B cell (primary cell): ENCODE measurements at regions of chr7 and their contacts with region 1.

Region 1: DNA sequence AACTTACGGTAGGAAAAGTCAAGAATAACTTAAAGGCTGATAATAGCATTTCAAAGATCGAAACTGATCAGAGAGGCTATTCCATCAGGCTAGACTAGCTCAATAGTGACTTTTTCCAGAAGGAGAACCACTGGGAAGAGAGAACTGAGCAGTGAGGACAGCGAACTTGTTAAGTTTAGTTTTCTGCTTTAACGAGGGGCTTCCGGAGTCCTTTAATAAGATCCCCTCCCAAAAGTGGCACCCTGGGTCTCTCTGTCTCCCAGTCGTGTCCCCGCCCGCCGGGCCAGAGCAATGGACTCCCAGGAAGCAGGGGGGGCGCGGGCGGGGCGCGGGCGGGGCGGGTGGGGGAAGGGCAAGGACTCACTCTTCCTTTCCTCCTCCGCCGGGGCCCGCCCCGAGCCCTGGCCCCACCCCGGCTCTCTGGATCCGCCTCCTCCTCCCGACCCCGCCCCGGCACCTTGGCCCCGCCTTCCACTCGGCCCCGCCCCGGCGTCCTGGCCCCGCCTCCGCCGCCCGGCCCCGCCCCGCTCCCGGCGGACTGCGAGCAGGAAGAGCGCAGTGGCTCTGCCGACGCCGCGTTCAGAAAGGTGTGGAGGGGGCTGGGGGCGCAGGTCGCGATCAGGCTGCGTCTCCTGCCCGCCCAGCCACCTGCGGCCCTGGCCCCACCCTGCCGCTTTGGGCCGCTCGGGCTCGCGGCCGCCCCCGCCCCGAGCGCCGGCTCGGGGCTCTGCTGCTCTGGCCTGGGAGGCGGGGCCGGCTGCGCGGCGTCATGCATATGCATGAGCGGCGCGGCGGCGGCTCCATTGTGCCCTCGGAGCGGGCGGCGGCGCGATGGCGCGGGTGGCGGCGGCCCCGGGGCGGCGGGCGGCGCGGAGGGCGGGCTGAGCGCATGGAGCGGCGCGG is at the start of gene ZMIZ2:
- DNase-seq: peak; percentile 96
- ATAC-seq: peak; percentile 80
- H3K4me3 ChIP-seq: peak within 1 kb of the TSS; percentile 61 to 89 (median 74)
- H3K4me3 Mint-ChIP-seq: peak within 1 kb of the TSS; percentile 88
- H3K27ac ChIP-seq: peak within 1 kb of the TSS; percentile 96 to 97
- H3K27ac Mint-ChIP-seq: peak within 1 kb of the TSS; percentile 97
- H3K4me1 ChIP-seq: peaks cover 43 to 48% of the 10 kb centered on the region in 2 donors
- H3K4me1 Mint-ChIP-seq: peaks cover 51% of the 10 kb centered on the region
- H3K27me3 ChIP-seq: no peaks in the 10 kb centered on the region
- H3K27me3 Mint-ChIP-seq: no peaks in the 10 kb centered on the region
- CTCF ChIP-seq: no peak
- total RNA-seq, gene ZMIZ2: 442 and 446 TPM in 2 replicates

Region 2: DNA sequence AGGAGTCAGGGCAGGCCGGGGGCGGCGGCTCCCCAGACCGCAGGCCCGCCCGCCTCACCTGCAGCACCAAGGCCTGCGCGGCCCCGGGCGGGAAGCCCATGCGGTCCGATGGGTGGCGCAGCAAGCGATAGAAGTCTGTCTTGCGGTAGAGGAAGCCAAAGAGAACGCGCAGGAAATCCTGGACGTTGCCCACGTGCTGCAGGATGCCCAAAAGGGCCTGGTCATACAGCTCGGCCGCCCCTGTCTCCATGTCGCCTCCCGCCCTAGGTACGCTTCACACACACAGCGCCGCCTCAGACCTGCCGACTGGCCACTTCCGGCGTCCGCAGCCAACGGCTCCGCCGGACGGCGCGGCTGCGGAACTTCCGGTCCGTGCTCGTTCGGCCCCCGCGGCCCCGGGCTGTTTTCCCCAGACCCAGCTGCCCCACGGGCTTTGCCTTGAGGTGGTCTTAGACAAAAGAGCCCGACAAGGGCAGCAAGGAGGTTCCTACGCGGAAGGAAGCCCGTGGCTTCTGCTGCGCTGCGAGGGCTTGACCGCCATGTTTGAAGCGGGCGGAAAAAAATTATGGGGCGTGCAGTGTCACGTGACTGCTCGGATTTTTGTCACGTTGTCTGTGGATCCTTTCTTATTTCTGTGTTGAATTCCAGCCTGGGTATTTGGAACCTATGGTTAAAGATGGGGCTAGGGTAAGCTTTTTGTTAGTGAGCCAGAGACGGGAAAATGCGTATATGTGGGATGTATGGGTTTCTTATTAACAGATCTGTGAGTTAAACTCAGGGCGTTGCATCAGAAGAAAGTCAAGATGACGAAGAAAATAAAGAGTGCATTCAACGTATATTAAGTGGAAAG is 257.7 kb before region 1 on chr7 and contains the start of gene NUDCD3:
- CTCF ChIA-PET with region 1: no interaction called
- POLR2A ChIA-PET with region 1: no interaction called
- intact Hi-C with region 1: loop called (anchors 2 kb)
- DNase-seq: peak; percentile 91
- ATAC-seq: peak; percentile 84
- H3K4me3 ChIP-seq: peak within 1 kb of the TSS; percentile 89 to 98 (median 93)
- H3K4me3 Mint-ChIP-seq: peak within 1 kb of the TSS; percentile 91
- H3K27ac ChIP-seq: peak within 1 kb of the TSS; percentile 93 to 94
- H3K27ac Mint-ChIP-seq: peak within 1 kb of the TSS; percentile 93
- H3K4me1 ChIP-seq: peaks cover 19 to 28% of the 10 kb centered on the region in 2 donors
- H3K4me1 Mint-ChIP-seq: peaks cover 44% of the 10 kb centered on the region
- H3K27me3 ChIP-seq: peaks cover 0 to 6% (median 3%) of the 10 kb centered on the region in 4 experiments
- H3K27me3 Mint-ChIP-seq: peaks cover 8% of the 10 kb centered on the region
- CTCF ChIP-seq: peak; percentile 27
- total RNA-seq, gene NUDCD3: 101 and 120 TPM in 2 replicates

Region 3: DNA sequence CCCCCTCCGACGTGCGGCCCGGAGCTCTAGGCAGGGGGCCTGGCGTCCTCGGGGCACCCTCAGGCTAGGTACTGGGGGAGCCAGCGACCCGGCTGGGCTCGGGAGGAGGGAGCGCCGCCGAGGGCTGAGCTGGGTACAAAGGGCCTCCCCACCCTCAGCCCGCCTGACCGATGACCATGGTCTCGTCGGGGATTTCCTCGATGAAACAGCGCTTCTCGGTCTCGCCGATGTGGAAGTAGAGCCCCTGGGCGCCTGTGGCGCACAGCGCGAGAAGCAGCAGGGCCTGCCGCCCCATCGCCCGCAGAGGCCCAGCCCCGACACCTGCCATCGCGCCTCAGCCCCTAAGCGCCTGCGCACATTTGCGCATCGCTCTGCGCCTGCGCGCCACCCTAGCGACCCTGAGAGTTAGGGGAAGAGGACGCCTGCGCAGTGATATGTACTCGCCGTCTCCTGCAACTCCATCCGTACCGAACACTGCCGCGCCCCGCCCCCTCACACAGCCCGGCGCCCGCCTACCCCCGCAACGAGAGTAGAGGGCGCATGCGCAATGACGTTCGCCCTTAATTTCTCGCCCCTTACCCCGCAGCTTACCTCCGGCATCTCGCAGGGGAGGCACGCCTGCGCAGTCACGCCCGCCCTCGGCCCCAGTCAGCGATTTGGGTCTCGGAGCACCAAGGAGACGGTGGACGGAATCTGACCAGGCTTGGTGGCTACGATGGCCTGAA is 166.3 kb before region 1 on chr7 and contains the start of gene TMED4:
- CTCF ChIA-PET with region 1: interaction called, 5 read pairs
- POLR2A ChIA-PET with region 1: interaction called, 5 read pairs
- intact Hi-C with region 1: loop called (anchors 1 kb)
- DNase-seq: peak; percentile 100
- ATAC-seq: peak; percentile 92
- H3K4me3 ChIP-seq: peak within 1 kb of the TSS; percentile 72 to 99 (median 88)
- H3K4me3 Mint-ChIP-seq: peak within 1 kb of the TSS; percentile 96
- H3K27ac ChIP-seq: peak within 1 kb of the TSS; percentile 92 to 97
- H3K27ac Mint-ChIP-seq: peak within 1 kb of the TSS; percentile 99
- H3K4me1 ChIP-seq: peaks cover 21% of the 10 kb centered on the region in 2 donors
- H3K4me1 Mint-ChIP-seq: peaks cover 28% of the 10 kb centered on the region
- H3K27me3 ChIP-seq: no peaks in the 10 kb centered on the region
- H3K27me3 Mint-ChIP-seq: no peaks in the 10 kb centered on the region
- CTCF ChIP-seq: no peak
- total RNA-seq, gene TMED4: 84.0 and 84.1 TPM in 2 replicates

Region 4: DNA sequence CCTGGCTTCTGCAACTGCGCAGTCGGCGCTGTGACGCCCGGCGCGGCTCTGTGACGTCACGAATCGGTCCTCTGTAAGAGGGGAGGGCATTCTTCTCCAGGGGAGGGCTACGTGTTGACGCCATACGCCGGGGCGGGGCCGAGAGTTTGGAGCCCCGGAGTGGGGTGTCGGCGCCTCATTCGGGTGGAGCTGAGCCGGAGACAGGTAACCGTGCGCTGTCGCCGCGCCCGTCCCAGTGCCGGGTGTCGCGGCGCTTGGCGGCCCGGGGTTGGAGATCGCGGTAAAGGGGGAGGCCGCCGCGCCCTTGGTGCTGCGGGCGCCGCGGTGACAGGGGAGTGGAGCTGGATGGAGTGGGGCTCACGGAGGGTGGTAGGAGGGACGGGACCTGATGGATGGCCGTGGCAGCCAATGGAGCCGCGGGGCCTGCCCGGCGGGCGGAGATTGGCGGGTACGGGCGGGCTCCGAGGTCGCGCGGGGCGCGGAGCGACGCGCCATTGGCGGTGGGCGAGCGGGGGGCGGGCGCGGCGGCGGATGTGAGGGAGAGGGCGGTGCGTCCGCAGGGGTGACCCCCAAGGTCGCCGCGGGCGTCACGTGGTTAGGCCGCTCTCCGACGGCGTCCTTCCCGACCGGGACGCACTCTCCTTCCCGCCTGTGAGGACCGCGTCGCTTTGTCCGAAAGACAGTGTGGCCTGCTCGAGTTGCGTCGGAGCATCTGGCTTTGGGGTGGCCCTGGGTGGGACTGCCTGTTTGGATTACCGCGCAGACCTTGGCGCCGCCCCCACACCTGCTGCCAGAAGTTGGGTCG is 141.6 kb before region 1 on chr7 and contains the start of gene OGDH:
- CTCF ChIA-PET with region 1: interaction called, 15 read pairs
- POLR2A ChIA-PET with region 1: interaction called, 15 read pairs
- intact Hi-C with region 1: loop called (anchors 1 kb)
- DNase-seq: peak; percentile 100
- ATAC-seq: peak; percentile 91
- H3K4me3 ChIP-seq: peak within 1 kb of the TSS; percentile 80 to 93 (median 85)
- H3K4me3 Mint-ChIP-seq: peak within 1 kb of the TSS; percentile 99
- H3K27ac ChIP-seq: peak within 1 kb of the TSS; percentile 87 to 96
- H3K27ac Mint-ChIP-seq: peak within 1 kb of the TSS; percentile 99
- H3K4me1 ChIP-seq: peaks cover 15 to 34% of the 10 kb centered on the region in 2 donors
- H3K4me1 Mint-ChIP-seq: peaks cover 41% of the 10 kb centered on the region
- H3K27me3 ChIP-seq: no peaks in the 10 kb centered on the region
- H3K27me3 Mint-ChIP-seq: peaks cover 4% of the 10 kb centered on the region
- CTCF ChIP-seq: no peak
- total RNA-seq, gene OGDH: 71.5 and 80.2 TPM in 2 replicates

Region 5: GRCh38 chr7:44735403-44736165 is 12.7 kb before region 1 on chr7:
- CTCF ChIA-PET with region 1: no interaction called
- POLR2A ChIA-PET with region 1: interaction called, 6 read pairs
- intact Hi-C with region 1: loop called (anchors 1 kb)
- DNase-seq: no peak
- ATAC-seq: peak; percentile 54
- H3K4me3 ChIP-seq: no peak overlapping the region
- H3K4me3 Mint-ChIP-seq: no peak overlapping the region
- H3K27ac ChIP-seq: no peak overlapping the region
- H3K27ac Mint-ChIP-seq: no peak overlapping the region
- H3K4me1 ChIP-seq: peaks cover 0 to 4% of the 10 kb centered on the region in 2 donors
- H3K4me1 Mint-ChIP-seq: peaks cover 9% of the 10 kb centered on the region
- H3K27me3 ChIP-seq: no peaks in the 10 kb centered on the region
- H3K27me3 Mint-ChIP-seq: no peaks in the 10 kb centered on the region
- CTCF ChIP-seq: no peak

Region 6: GRCh38 chr7:44797329-44798251 is 49.3 kb after region 1 on chr7:
- CTCF ChIA-PET with region 1: interaction called, 17 read pairs
- POLR2A ChIA-PET with region 1: interaction called, 10 read pairs
- intact Hi-C with region 1: loop called (anchors 1 kb)
- DNase-seq: peak; percentile 87
- ATAC-seq: peak; percentile 49
- H3K4me3 ChIP-seq: peak overlapping the region; percentile 77 to 98 (median 93)
- H3K4me3 Mint-ChIP-seq: peak overlapping the region; percentile 93
- H3K27ac ChIP-seq: peak overlapping the region; percentile 92 to 97
- H3K27ac Mint-ChIP-seq: peak overlapping the region; percentile 98
- H3K4me1 ChIP-seq: peaks cover 15 to 26% of the 10 kb centered on the region in 2 donors
- H3K4me1 Mint-ChIP-seq: peaks cover 40% of the 10 kb centered on the region
- H3K27me3 ChIP-seq: no peaks in the 10 kb centered on the region
- H3K27me3 Mint-ChIP-seq: no peaks in the 10 kb centered on the region
- CTCF ChIP-seq: peak; percentile 73

Region 7: GRCh38 chr7:44867073-44867995 is 119.0 kb after region 1 on chr7:
- CTCF ChIA-PET with region 1: no interaction called
- POLR2A ChIA-PET with region 1: no interaction called
- intact Hi-C with region 1: no loop called
- DNase-seq: no peak
- ATAC-seq: no peak
- H3K4me3 ChIP-seq: no peak overlapping the region
- H3K4me3 Mint-ChIP-seq: no peak overlapping the region
- H3K27ac ChIP-seq: no peak overlapping the region
- H3K27ac Mint-ChIP-seq: no peak overlapping the region
- H3K4me1 ChIP-seq: no peaks in the 10 kb centered on the region
- H3K4me1 Mint-ChIP-seq: no peaks in the 10 kb centered on the region
- H3K27me3 ChIP-seq: no peaks in the 10 kb centered on the region
- H3K27me3 Mint-ChIP-seq: peaks cover 5% of the 10 kb centered on the region
- CTCF ChIP-seq: no peak

Region 8: DNA sequence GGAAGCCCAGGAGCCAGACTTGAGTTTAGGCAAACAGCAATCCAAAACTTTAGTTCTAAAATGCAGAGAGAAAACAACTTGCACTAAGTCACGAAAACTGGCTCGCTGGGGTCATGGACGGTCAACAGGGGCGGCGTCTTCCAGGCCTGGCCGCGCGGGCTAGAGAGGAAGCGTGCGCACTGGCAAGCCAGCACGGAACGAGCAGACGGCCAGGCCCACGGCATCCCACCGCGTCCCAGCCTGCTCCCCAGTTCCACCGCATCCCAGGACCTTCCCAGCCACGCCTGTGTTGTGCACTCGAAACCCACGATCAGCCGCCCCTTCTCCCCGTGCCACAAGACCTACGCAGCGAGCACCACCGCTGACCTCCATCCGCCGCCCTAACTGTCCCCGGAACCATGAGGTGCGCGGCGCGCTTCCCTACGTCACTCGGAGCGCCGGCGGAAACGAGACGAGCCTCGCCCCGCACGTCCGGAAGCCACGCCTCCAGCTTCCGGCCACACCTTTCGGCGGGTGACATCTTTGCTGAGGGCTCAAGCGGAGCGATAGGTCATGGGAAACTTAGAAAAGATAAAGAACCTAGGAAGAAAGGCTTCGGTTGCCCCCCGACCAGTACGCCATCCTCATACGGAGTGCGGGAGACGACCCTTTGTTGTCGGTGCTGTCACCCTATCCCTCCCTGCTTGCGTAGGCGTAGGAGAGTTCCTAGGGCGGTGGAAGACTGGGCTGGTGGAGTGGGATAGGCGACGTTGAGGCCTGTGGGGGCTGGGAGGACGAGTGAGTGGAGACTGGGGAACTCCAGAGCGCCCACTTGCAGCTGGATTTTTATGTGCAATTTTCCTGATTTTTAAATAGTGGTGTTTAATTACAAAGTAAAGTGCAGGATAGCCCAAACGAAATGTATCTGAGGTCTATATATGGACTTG is 363.3 kb after region 1 on chr7 and contains the start of gene TBRG4:
- CTCF ChIA-PET with region 1: no interaction called
- POLR2A ChIA-PET with region 1: no interaction called
- intact Hi-C with region 1: loop called (anchors 2 kb)
- DNase-seq: peak; percentile 96
- ATAC-seq: peak; percentile 94
- H3K4me3 ChIP-seq: peak within 1 kb of the TSS; percentile 67 to 93 (median 72)
- H3K4me3 Mint-ChIP-seq: peak within 1 kb of the TSS; percentile 91
- H3K27ac ChIP-seq: peak within 1 kb of the TSS; percentile 91 to 98
- H3K27ac Mint-ChIP-seq: peak within 1 kb of the TSS; percentile 95
- H3K4me1 ChIP-seq: peaks cover 22 to 38% of the 10 kb centered on the region in 2 donors
- H3K4me1 Mint-ChIP-seq: peaks cover 40% of the 10 kb centered on the region
- H3K27me3 ChIP-seq: no peaks in the 10 kb centered on the region
- H3K27me3 Mint-ChIP-seq: no peaks in the 10 kb centered on the region
- CTCF ChIP-seq: no peak
- total RNA-seq, gene TBRG4: 111 and 116 TPM in 2 replicates